WTC11 (cell line): ENCODE measurements at regions of chr11 and their contacts with region 1.

Region 1: DNA sequence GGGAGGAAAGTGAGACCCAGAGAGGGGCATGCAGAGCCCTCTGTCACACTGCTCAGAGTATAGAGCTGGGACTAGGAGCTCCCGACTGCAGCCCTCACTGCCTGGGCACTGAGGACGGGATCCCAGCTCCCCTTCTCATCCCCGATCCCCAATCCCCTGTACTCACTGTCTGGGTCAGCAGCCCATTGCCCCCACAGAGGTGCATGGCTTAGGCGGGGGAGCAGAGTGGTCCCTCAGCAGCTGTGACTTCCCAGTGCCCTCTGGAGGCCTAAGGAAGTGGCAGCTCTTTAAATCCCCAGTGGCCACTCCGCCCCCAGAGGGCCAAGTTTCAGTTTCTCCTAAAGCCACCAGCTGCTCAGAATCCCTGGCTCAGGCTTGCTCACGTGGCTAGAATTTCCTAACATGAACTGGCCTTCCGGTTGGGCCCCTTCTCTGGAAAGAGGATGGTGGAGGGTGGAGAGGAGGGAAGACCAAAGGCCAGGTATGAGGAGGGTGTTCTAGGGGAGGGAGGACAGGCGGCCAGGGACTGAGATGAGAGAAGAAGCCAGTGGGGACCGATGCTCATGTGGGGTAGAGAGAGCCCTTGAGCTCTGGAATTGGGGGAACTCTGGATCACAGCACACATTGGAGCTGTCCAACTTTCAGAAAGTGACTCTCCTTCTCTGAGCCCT is at the start of gene BATF2:
- DNase-seq: peak; percentile 76
- ATAC-seq: peak; percentile 97
- H3K4me3 Mint-ChIP-seq: peak within 1 kb of the TSS; percentile 56
- H3K27ac Mint-ChIP-seq: peak within 1 kb of the TSS; percentile 78
- H3K4me1 Mint-ChIP-seq: peaks cover 18% of the 10 kb centered on the region
- H3K27me3 Mint-ChIP-seq: no peaks in the 10 kb centered on the region
- CTCF ChIP-seq: no peak
- total RNA-seq, gene BATF2: 1.3 to 3.2 TPM (median 2.2 TPM) in 3 replicates

Region 2: GRCh38 chr11:64924102-64924851 is 72.6 kb before region 1 on chr11 and contains the start of gene PPP2R5B:
- CTCF ChIA-PET with region 1: interaction called, 13 read pairs
- POLR2A ChIA-PET with region 1: interaction called, 3 read pairs
- DNase-seq: peak; percentile 85
- ATAC-seq: peak; percentile 91
- H3K4me3 Mint-ChIP-seq: peak within 1 kb of the TSS; percentile 93
- H3K27ac Mint-ChIP-seq: peak within 1 kb of the TSS; percentile 99
- H3K4me1 Mint-ChIP-seq: no peaks in the 10 kb centered on the region; the same call in 1 of the 2 replicates
- H3K27me3 Mint-ChIP-seq: no peaks in the 10 kb centered on the region
- CTCF ChIP-seq: no peak
- total RNA-seq, gene PPP2R5B: 8.7 to 10.2 TPM (median 9.1 TPM) in 3 replicates

Region 3: DNA sequence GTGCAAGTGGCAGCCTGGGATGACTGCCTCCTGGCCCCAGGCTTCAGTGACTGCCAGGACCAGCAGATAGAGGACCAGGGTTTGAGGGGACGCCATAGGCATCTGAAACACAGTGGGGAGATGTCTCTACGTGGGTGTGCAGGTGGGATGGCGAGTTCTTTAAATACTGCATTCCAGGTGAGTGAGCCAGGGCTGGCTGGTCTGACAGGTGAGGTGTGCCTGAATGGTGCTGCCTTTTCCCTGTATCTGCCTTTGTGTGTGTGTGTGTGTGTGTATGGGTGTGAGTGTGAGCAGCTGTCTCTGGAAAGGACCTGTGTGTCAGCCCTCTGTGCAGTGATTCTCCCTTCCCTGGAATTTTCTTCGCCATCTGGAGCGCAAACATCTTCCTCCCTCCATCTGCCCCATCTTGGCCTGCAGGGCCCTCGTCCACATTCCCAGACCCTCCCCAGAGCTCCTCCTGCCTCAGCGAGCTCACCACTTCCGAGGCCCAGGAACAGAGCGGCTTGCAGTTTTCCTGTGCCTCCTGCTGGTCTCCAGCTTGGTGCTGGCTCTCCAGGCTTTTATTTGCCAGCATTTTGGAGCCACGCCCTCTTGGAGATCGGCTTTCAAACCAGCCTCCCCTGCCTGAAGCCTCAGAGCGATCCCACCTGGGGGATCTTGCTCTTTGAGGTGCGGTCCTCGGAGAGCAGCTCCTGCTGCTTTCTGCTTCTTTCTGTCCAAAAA is 61.3 kb before region 1 on chr11 and contains the start of gene GPHA2:
- CTCF ChIA-PET with region 1: interaction called, 28 read pairs
- POLR2A ChIA-PET with region 1: interaction called, 3 read pairs
- DNase-seq: peak; percentile 80
- ATAC-seq: peak; percentile 88
- H3K4me3 Mint-ChIP-seq: peak within 1 kb of the TSS; percentile 50
- H3K27ac Mint-ChIP-seq: peak within 1 kb of the TSS; percentile 90
- H3K4me1 Mint-ChIP-seq: peaks cover 24% of the 10 kb centered on the region
- H3K27me3 Mint-ChIP-seq: no peaks in the 10 kb centered on the region
- CTCF ChIP-seq: no peak
- total RNA-seq, gene GPHA2: 1.0 to 1.6 TPM (median 1.6 TPM) in 3 replicates

Region 4: GRCh38 chr11:65083834-65084597 is 87.2 kb after region 1 on chr11 and contains the starts of genes CDCA5 and ZFPL1:
- CTCF ChIA-PET with region 1: no interaction called
- POLR2A ChIA-PET with region 1: no interaction called
- DNase-seq: peak; percentile 96
- ATAC-seq: peak; percentile 81
- H3K4me3 Mint-ChIP-seq: peak within 1 kb of the TSS; percentile 94
- H3K27ac Mint-ChIP-seq: peak within 1 kb of the TSS; percentile 99
- H3K4me1 Mint-ChIP-seq: peaks cover 10% of the 10 kb centered on the region
- H3K27me3 Mint-ChIP-seq: no peaks in the 10 kb centered on the region
- CTCF ChIP-seq: no peak
- total RNA-seq, gene CDCA5: 80.6 to 95.9 TPM (median 86.9 TPM) in 3 replicates
- total RNA-seq, gene ZFPL1: 32.2 to 33.8 TPM (median 32.8 TPM) in 3 replicates